Mammary epithelial cell (primary cell): ENCODE measurements at regions of chr1 and their contacts with region 1.

Region 1: DNA sequence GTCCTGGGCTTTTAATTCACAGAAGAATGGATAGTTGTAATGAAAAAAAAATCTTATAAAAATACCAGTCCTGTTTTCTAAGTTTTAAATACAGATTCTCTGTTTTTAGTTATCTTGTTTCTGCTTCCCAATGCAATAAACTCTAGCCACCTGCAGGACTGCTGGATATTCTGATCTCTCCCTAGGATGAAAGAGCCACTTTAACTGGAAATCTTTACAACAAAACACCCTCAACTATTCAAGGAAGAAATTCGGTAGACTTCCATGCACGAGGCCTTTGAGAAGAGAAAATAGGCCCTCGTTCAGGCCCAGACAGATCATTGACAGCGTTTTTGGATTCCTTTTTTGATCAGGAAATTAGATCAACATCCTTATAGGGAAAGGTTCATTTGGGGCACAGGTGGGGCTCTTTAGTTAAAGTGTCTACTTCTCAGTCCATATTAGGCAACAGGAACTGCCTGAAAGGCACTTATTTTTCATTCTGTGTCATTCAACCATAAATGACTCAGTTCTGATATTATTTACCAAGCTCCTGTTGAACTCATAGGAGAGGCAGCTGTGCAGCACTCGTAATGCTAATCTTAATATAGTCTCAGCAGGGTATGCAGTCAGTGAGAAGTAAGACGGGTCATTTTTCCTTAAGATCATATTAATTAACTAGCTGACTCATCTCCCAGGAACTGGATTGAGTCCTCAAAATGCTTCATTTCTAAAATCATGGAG is 71.1 kb upstream of the ERRFI1 start:
- DNase-seq: peak; percentile 95
- H3K4me3 ChIP-seq: peak overlapping the region in 1 of 3 experiments; percentile 4
- H3K27ac ChIP-seq: peak overlapping the region; percentile 95
- H3K4me1 ChIP-seq: peaks cover 40% of the 10 kb centered on the region
- H3K27me3 ChIP-seq: no peaks in the 10 kb centered on the region
- CTCF ChIP-seq: no peak

Region 2: GRCh38 chr1:7975212-7975865 is 121.9 kb before region 1 on chr1:
- CTCF ChIA-PET with region 1: no interaction called
- dilution Hi-C with region 1: no loop called
- in situ Hi-C with region 1: no loop called
- intact Hi-C with region 1: no loop called
- DNase-seq: peak; percentile 75
- H3K4me3 ChIP-seq: no peak overlapping the region
- H3K27ac ChIP-seq: no peak overlapping the region
- H3K4me1 ChIP-seq: no peaks in the 10 kb centered on the region
- H3K27me3 ChIP-seq: no peaks in the 10 kb centered on the region
- CTCF ChIP-seq: peak; percentile 96 to 98

Region 3: DNA sequence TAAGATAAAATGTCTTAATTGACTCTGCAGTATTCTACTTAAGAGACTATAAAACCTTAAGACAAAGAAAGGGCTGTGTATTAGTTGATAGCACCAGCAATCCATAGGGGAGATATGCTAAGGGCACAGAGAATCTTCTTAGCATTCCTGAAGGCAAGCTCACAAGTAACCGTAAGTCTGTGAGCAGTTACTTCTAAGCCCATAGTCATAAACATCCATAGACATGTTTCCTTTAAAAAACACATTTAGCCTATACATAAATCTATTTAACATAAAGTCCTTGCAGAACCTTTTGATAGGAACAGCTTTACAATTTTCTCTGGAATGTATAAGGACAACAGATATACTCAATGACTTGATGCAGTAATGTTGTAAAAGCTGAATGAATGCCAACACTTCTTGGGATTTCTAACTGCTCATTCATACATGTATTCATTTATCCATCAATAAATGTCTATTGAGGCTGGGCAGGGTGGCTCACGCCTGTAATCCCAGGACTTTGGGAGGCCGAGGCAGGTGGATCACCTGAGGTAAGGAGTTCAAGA is 64.8 kb before region 1 on chr1:
- CTCF ChIA-PET with region 1: no interaction called
- dilution Hi-C with region 1: no loop called
- in situ Hi-C with region 1: no loop called
- intact Hi-C with region 1: loop called (anchors 1 kb)
- DNase-seq: no peak
- H3K4me3 ChIP-seq: no peak overlapping the region
- H3K27ac ChIP-seq: no peak overlapping the region
- H3K4me1 ChIP-seq: peaks cover 32% of the 10 kb centered on the region
- H3K27me3 ChIP-seq: no peaks in the 10 kb centered on the region
- CTCF ChIP-seq: no peak

Region 4: GRCh38 chr1:8061210-8061609 is 36.0 kb before region 1 on chr1:
- CTCF ChIA-PET with region 1: no interaction called
- dilution Hi-C with region 1: no loop called
- in situ Hi-C with region 1: no loop called
- intact Hi-C with region 1: loop called (anchors 5 kb)
- DNase-seq: peak; percentile 90
- H3K4me3 ChIP-seq: no peak overlapping the region
- H3K27ac ChIP-seq: peak overlapping the region; percentile 78
- H3K4me1 ChIP-seq: peaks cover 36% of the 10 kb centered on the region
- H3K27me3 ChIP-seq: no peaks in the 10 kb centered on the region
- CTCF ChIP-seq: no peak

Region 5: DNA sequence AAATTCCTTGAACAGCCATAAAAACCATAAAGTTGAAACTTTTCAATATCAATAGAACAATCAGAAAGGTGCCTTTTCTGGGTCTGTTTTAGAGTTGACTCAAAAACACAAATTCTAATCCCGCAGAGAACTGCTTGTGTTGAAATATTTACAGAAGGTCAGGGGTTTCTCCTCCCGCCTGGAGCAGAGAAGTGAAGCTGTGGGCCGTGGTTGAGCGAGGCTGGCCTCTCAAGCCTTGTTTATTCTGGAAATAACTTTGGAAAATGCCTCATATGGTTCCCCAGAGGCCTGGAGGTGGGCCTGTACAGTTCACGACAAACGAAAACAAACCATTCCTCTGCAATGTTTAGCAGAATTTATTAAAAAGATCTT is 19.6 kb after region 1 on chr1:
- CTCF ChIA-PET with region 1: no interaction called
- dilution Hi-C with region 1: no loop called
- in situ Hi-C with region 1: no loop called
- intact Hi-C with region 1: loop called (anchors 1 kb)
- DNase-seq: no peak
- H3K4me3 ChIP-seq: no peak overlapping the region
- H3K27ac ChIP-seq: no peak overlapping the region
- H3K4me1 ChIP-seq: peaks cover 21% of the 10 kb centered on the region
- H3K27me3 ChIP-seq: no peaks in the 10 kb centered on the region
- CTCF ChIP-seq: no peak

Region 6: DNA sequence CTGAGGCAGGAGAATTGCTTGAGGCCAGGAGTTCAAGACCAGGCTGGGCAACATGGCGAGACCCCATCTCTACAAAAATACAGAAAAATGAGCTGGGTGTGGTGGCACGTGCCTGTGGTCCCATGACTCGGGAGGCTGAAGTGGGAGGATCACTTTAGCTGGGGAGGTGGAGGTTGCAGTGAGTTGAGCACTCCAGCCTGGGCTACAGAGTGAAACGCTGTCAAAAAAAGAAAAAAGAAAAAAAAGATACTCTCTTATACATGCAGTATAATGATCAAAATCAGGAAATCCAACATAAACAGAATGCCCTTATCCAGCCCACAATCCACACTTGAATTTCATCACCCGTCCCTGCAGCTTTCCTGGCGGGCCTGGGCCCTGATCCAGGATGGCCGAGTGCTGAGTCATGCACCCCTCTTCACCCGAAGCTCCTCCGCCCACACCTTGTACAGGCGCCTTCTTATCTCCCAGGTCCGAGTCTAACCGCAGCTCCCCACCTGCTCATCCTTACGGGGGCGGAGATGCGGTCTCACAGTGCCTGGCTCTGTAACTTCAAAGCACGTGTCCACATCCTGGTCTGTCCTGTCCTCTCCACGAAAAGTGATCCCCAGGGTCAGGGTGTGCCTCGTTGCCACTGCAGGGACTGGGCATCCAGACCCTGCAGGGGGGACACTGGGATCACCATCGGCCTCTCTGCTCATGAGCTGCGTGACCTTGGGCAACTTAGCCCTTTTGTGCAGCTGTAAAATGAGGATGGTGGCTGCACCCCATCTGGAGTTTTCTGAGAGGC is 100.5 kb after region 1 on chr1:
- CTCF ChIA-PET with region 1: no interaction called
- dilution Hi-C with region 1: no loop called
- in situ Hi-C with region 1: no loop called
- intact Hi-C with region 1: loop called (anchors 5 kb)
- DNase-seq: peak; percentile 94
- H3K4me3 ChIP-seq: no peak overlapping the region
- H3K27ac ChIP-seq: peak overlapping the region; percentile 25
- H3K4me1 ChIP-seq: peaks cover 45% of the 10 kb centered on the region
- H3K27me3 ChIP-seq: no peaks in the 10 kb centered on the region
- CTCF ChIP-seq: no peak

Region 7: GRCh38 chr1:8211589-8212442 is 114.6 kb after region 1 on chr1:
- CTCF ChIA-PET with region 1: no interaction called
- dilution Hi-C with region 1: loop called (anchors 5 kb)
- in situ Hi-C with region 1: no loop called
- intact Hi-C with region 1: loop called (anchors 2 kb)
- DNase-seq: peak; percentile 98
- H3K4me3 ChIP-seq: no peak overlapping the region
- H3K27ac ChIP-seq: peak overlapping the region; percentile 86
- H3K4me1 ChIP-seq: peaks cover 25% of the 10 kb centered on the region
- H3K27me3 ChIP-seq: no peaks in the 10 kb centered on the region
- CTCF ChIP-seq: no peak

Region 8: GRCh38 chr1:8314346-8315280 is 217.4 kb after region 1 on chr1:
- CTCF ChIA-PET with region 1: no interaction called
- dilution Hi-C with region 1: no loop called
- in situ Hi-C with region 1: no loop called
- intact Hi-C with region 1: loop called (anchors 2 kb)
- DNase-seq: peak; percentile 62
- H3K4me3 ChIP-seq: no peak overlapping the region
- H3K27ac ChIP-seq: no peak overlapping the region
- H3K4me1 ChIP-seq: peaks cover 19% of the 10 kb centered on the region
- H3K27me3 ChIP-seq: no peaks in the 10 kb centered on the region
- CTCF ChIP-seq: peak; percentile 95 to 97